Caco-2 (cell line): ENCODE measurements at regions of chr11 and their contacts with region 1.

Region 1: GRCh38 chr11:71283881-71284441 is 31.6 kb upstream of the SHANK2 start:
- DNase-seq: peak; percentile 99
- H3K4me3 ChIP-seq: peak overlapping the region; percentile 38
- H3K4me3 Mint-ChIP-seq: peak overlapping the region; percentile 72
- H3K27ac Mint-ChIP-seq: peak overlapping the region; percentile 87
- H3K4me1 ChIP-seq: peaks cover 45% of the 10 kb centered on the region
- H3K4me1 Mint-ChIP-seq: peaks cover 52% of the 10 kb centered on the region
- H3K27me3 ChIP-seq: no peaks in the 10 kb centered on the region
- H3K27me3 Mint-ChIP-seq: no peaks in the 10 kb centered on the region
- CTCF ChIP-seq: no peak

Region 2: GRCh38 chr11:71267807-71268421 is 16.0 kb before region 1 on chr11:
- CTCF ChIA-PET with region 1: interaction called, 3 read pairs
- POLR2A ChIA-PET with region 1: interaction called, 5 read pairs
- intact Hi-C with region 1: loop called (anchors 1 kb)
- DNase-seq: peak in 1 of 2 experiments; percentile 33
- H3K4me3 ChIP-seq: no peak overlapping the region
- H3K4me3 Mint-ChIP-seq: no peak overlapping the region
- H3K27ac Mint-ChIP-seq: peak overlapping the region; percentile 63
- H3K4me1 ChIP-seq: peaks cover 50% of the 10 kb centered on the region
- H3K4me1 Mint-ChIP-seq: peaks cover 46% of the 10 kb centered on the region
- H3K27me3 ChIP-seq: no peaks in the 10 kb centered on the region
- H3K27me3 Mint-ChIP-seq: no peaks in the 10 kb centered on the region
- CTCF ChIP-seq: no peak

Region 3: DNA sequence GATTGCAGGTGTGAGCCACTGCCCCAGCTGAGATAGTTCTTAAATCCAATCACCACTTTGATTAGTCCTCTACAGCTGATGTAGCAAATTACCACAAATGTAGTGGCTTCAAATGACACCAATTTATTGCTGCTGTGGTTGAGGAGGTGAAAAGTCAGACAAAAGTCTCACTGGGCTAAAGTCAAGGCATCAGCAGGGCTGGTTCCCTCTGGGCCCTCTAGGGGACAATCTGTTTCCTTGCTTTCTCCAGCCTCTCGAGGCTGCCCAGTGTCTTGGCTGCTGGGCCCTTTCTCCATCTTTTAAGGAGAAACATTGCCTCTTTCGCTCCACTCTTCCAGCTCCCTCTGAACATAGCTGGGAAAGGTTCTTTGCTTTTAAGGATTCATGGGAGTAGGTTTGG is 18.9 kb after region 1 on chr11:
- CTCF ChIA-PET with region 1: interaction called, 4 read pairs
- POLR2A ChIA-PET with region 1: interaction called, 10 read pairs
- intact Hi-C with region 1: loop called (anchors 1 kb)
- DNase-seq: peak in 1 of 2 experiments; percentile 46
- H3K4me3 ChIP-seq: no peak overlapping the region
- H3K4me3 Mint-ChIP-seq: no peak overlapping the region
- H3K27ac Mint-ChIP-seq: no peak overlapping the region
- H3K4me1 ChIP-seq: peaks cover 35% of the 10 kb centered on the region
- H3K4me1 Mint-ChIP-seq: peaks cover 27% of the 10 kb centered on the region
- H3K27me3 ChIP-seq: no peaks in the 10 kb centered on the region
- H3K27me3 Mint-ChIP-seq: no peaks in the 10 kb centered on the region
- CTCF ChIP-seq: peak; percentile 39 to 62